Tibial artery (tissue), 4 donors: ENCODE measurements at regions of chr1 and their contacts with region 1.

Region 1: DNA sequence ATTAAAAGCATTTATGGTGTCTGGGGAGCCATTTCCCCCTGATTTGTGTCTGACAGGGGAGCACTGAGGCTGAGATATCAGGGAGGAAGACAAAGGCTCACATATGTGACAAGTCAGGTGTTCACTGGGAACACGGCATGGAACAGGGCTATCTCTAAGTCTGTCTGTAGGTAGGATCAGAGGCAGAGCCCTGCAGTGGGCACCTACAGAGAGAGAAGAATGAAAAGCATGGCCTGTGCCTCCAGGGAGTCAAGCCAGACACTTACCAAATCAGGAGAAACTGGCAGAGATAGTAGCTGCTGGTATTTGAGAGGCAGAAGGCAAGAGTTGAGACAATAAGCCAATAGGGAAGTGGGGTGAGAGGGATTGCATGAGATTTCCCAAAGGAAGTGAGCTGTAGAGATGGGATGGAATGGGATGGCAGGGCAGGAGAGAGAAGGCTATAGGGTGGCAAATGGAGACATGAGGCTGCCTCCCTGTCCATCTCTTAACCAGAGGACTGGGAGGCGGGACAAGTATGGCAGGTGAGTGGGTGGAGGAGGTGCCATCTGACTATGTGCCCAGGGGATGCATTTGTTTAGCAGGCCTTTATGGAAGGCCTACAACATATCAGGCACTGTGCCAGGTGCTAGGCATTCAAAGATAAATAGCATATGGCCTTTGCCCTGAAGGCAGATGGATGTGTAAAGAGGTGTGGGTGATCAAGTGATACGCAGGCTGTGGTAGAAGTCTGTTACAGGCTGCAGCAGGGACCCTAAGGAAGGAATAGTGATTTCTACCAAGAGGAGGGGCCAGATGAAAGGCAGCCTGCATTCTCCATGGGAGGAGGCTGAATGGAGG is 136.2 kb upstream of the IPO9 start:
- DNase-seq: no peak
- H3K4me3 ChIP-seq: no peak overlapping the region
- H3K27ac ChIP-seq: no peak overlapping the region
- H3K4me1 ChIP-seq: peaks cover 0 to 39% (median 23%) of the 10 kb centered on the region in 4 donors
- H3K27me3 ChIP-seq: no peaks in the 10 kb centered on the region
- CTCF ChIP-seq: no peak

Region 2: GRCh38 chr1:201511941-201512539 is 180.7 kb before region 1 on chr1:
- intact Hi-C with region 1: no loop called
- DNase-seq: peak; percentile 61 to 84
- H3K4me3 ChIP-seq: no peak overlapping the region
- H3K27ac ChIP-seq: peak overlapping the region; percentile 57 to 65
- H3K4me1 ChIP-seq: peaks cover 0 to 42% (median 29%) of the 10 kb centered on the region in 4 donors
- H3K27me3 ChIP-seq: no peaks in the 10 kb centered on the region
- CTCF ChIP-seq: no peak

Region 3: GRCh38 chr1:201565024-201565730 is 127.6 kb before region 1 on chr1:
- intact Hi-C with region 1: loop called (anchors 5 kb)
- DNase-seq: no peak
- H3K4me3 ChIP-seq: no peak overlapping the region
- H3K27ac ChIP-seq: peak overlapping the region in 1 of 2 donors; percentile 40
- H3K4me1 ChIP-seq: peaks cover 0 to 10% (median 9%) of the 10 kb centered on the region in 4 donors
- H3K27me3 ChIP-seq: no peaks in the 10 kb centered on the region
- CTCF ChIP-seq: no peak